CD8-positive, alpha-beta T cell (primary cell): ENCODE measurements at regions of chr9 and their contacts with region 1.

Region 1: GRCh38 chr9:137223078-137223970 is 1.3 kb upstream of the RNF208 start:
- DNase-seq: peak; percentile 95 to 99 (median 97)
- ATAC-seq: peak; percentile 93
- H3K4me3 ChIP-seq: peak overlapping the region; percentile 75 to 88
- H3K4me3 Mint-ChIP-seq: peak overlapping the region; percentile 83
- H3K27ac ChIP-seq: peak overlapping the region; percentile 69 to 86
- H3K27ac Mint-ChIP-seq: peak overlapping the region; percentile 81
- H3K4me1 ChIP-seq: peaks cover 19% of the 10 kb centered on the region
- H3K4me1 Mint-ChIP-seq: peaks cover 8% of the 10 kb centered on the region
- H3K27me3 ChIP-seq: peaks cover 0 to 5% of the 10 kb centered on the region in 2 experiments
- H3K27me3 Mint-ChIP-seq: peaks cover 3% of the 10 kb centered on the region
- CTCF ChIP-seq: no peak

Region 2: DNA sequence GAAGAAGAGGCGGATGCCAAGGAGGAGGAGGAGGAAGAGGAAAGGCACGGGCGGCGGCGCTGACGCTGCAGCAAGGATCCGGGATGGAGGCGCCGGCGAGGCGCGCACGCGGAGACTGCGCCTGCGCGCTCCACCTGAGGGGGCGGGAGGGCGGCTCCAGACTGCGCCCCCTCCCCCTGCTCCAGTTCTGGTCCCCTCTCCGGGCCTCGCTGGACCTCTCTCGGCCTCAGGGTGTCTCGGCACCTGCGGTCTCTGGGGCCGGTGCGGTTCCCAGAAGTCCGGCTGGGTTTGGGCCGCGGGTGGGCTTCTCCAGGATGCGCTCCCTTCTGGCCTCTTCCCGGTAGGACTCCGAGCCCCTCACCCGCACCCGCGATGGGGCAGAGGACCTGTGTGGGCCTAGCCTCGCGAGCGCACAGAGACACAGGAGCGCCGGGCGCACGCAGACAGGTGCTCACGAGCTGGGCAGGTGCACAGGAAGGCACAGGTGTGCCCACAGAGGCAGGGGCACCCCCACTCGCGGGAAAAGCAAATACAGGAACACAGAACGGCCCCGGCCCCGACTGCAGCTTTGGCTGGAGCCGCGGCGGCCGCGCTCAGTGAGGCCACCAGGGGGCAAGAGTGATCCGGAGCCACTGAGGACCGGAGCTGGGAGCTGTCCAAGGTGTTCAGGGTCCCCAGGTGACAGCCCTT is 177.1 kb before region 1 on chr9 and contains the start of gene NPDC1:
- CTCF ChIA-PET with region 1: interaction called, 7 read pairs
- POLR2A ChIA-PET with region 1: no interaction called
- intact Hi-C with region 1: loop called in 1 of 2 experiments (anchors 1 kb)
- DNase-seq: peak; percentile 64 to 87 (median 80)
- ATAC-seq: peak; percentile 87
- H3K4me3 ChIP-seq: peak within 1 kb of the TSS; percentile 28 to 45
- H3K4me3 Mint-ChIP-seq: peak within 1 kb of the TSS; percentile 68
- H3K27ac ChIP-seq: no peak within 1 kb of the TSS
- H3K27ac Mint-ChIP-seq: no peak within 1 kb of the TSS
- H3K4me1 ChIP-seq: peaks cover 29% of the 10 kb centered on the region
- H3K4me1 Mint-ChIP-seq: peaks cover 16% of the 10 kb centered on the region
- H3K27me3 ChIP-seq: peaks cover 44 to 67% of the 10 kb centered on the region in 2 experiments
- H3K27me3 Mint-ChIP-seq: peaks cover 26% of the 10 kb centered on the region
- CTCF ChIP-seq: peak; percentile 84
- total RNA-seq, gene NPDC1: 29.7 to 29.8 TPM

Region 3: GRCh38 chr9:137095664-137096517 is 127.4 kb before region 1 on chr9:
- CTCF ChIA-PET with region 1: interaction called, 9 read pairs
- POLR2A ChIA-PET with region 1: interaction called, 4 read pairs
- intact Hi-C with region 1: loop called (anchors 1 kb)
- DNase-seq: peak; percentile 73 to 95 (median 87)
- ATAC-seq: peak; percentile 97
- H3K4me3 ChIP-seq: peak overlapping the region; percentile 27 to 57
- H3K4me3 Mint-ChIP-seq: peak overlapping the region; percentile 80
- H3K27ac ChIP-seq: peak overlapping the region; percentile 73 to 84
- H3K27ac Mint-ChIP-seq: peak overlapping the region; percentile 96
- H3K4me1 ChIP-seq: peaks cover 22% of the 10 kb centered on the region
- H3K4me1 Mint-ChIP-seq: peaks cover 24% of the 10 kb centered on the region
- H3K27me3 ChIP-seq: no peaks in the 10 kb centered on the region
- H3K27me3 Mint-ChIP-seq: no peaks in the 10 kb centered on the region
- CTCF ChIP-seq: peak; percentile 68

Region 4: DNA sequence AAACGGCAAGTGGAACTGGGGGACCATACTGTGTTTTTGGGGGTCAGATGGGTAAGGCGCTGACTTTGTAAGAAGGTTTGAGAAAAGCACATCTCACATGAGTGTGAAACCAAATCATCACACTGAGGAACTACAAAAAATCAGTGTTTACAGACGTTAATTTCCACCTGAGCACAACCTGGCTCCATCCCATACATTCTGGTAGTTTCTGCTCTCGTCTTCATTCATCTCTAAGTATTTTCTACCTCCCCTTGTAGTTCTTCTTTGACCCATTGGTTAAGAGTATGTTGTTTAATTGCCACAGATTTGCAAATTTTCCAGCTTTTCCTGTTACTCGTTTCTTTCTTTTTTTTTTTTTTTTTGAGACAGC is 99.9 kb before region 1 on chr9:
- CTCF ChIA-PET with region 1: interaction called, 13 read pairs
- POLR2A ChIA-PET with region 1: interaction called, 4 read pairs
- intact Hi-C with region 1: loop called (anchors 1 kb)
- DNase-seq: no peak
- ATAC-seq: no peak
- H3K4me3 ChIP-seq: no peak overlapping the region
- H3K4me3 Mint-ChIP-seq: no peak overlapping the region
- H3K27ac ChIP-seq: no peak overlapping the region
- H3K27ac Mint-ChIP-seq: no peak overlapping the region
- H3K4me1 ChIP-seq: peaks cover 20% of the 10 kb centered on the region
- H3K4me1 Mint-ChIP-seq: peaks cover 25% of the 10 kb centered on the region
- H3K27me3 ChIP-seq: no peaks in the 10 kb centered on the region
- H3K27me3 Mint-ChIP-seq: no peaks in the 10 kb centered on the region
- CTCF ChIP-seq: no peak

Region 5: GRCh38 chr9:137176302-137177182 is 46.8 kb before region 1 on chr9:
- CTCF ChIA-PET with region 1: interaction called, 9 read pairs
- POLR2A ChIA-PET with region 1: no interaction called
- intact Hi-C with region 1: loop called in 1 of 2 experiments (anchors 2 kb)
- DNase-seq: peak in 3 of 9 experiments; percentile 23 to 55 (median 43)
- ATAC-seq: peak; percentile 61
- H3K4me3 ChIP-seq: no peak overlapping the region
- H3K4me3 Mint-ChIP-seq: no peak overlapping the region
- H3K27ac ChIP-seq: no peak overlapping the region
- H3K27ac Mint-ChIP-seq: no peak overlapping the region
- H3K4me1 ChIP-seq: peaks cover 8% of the 10 kb centered on the region
- H3K4me1 Mint-ChIP-seq: no peaks in the 10 kb centered on the region
- H3K27me3 ChIP-seq: peaks cover 0 to 7% of the 10 kb centered on the region in 2 experiments
- H3K27me3 Mint-ChIP-seq: no peaks in the 10 kb centered on the region
- CTCF ChIP-seq: peak; percentile 41

Region 6: DNA sequence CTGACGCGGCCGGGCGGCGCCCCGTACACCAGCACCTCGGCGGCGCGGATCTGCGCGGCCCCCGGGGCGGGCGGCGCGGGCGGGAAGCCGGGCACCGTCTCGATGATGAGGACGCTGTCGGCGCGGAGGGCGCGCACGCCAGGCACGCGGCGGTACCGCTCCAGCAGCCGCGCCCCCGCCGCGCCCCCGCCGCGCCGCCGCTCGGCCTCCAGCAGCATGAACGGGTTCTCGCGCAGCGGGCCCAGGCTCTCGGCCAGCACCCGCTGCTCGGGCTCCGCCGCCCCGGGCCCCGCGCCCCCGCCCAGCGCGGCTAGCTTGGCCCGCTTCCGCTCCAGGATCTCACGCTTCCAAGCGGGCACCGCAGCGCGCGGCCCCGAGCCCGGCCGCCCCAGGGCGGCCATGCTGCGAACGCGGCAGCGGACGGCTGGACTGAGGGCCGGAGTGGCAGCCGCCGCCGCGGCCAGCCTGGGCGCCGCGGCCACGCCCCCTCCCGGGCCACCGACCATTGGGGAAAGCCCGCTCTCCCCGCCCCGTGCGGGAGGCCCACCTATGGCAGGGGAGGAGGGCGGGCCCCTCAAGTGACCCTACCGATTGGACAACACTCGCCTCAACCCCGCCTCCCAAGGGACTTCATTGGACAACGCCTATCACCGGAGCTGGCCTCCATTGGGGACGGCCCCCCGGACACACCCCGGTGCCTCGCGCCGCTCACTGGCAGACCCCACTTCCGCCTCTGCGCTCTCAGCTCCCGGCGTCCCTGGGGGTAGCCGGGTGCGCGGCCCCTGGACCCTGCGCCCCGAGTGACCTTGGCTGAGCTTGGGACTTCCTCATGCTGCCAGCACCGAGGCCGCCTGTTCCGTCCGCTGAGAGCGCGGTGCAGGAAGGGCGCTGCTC is 22.8 kb before region 1 on chr9 and contains the start of gene TPRN:
- CTCF ChIA-PET with region 1: interaction called, 6 read pairs
- POLR2A ChIA-PET with region 1: interaction called, 22 read pairs
- intact Hi-C with region 1: loop called (anchors 1 kb)
- DNase-seq: peak; percentile 96 to 99 (median 98)
- ATAC-seq: peak; percentile 96
- H3K4me3 ChIP-seq: peak within 1 kb of the TSS; percentile 64 to 88
- H3K4me3 Mint-ChIP-seq: peak within 1 kb of the TSS; percentile 83
- H3K27ac ChIP-seq: peak within 1 kb of the TSS; percentile 65 to 82
- H3K27ac Mint-ChIP-seq: peak within 1 kb of the TSS; percentile 57
- H3K4me1 ChIP-seq: peaks cover 22% of the 10 kb centered on the region
- H3K4me1 Mint-ChIP-seq: peaks cover 27% of the 10 kb centered on the region
- H3K27me3 ChIP-seq: no peaks in the 10 kb centered on the region
- H3K27me3 Mint-ChIP-seq: no peaks in the 10 kb centered on the region
- CTCF ChIP-seq: no peak
- total RNA-seq, gene TPRN: 4.1 to 4.4 TPM

Region 7: DNA sequence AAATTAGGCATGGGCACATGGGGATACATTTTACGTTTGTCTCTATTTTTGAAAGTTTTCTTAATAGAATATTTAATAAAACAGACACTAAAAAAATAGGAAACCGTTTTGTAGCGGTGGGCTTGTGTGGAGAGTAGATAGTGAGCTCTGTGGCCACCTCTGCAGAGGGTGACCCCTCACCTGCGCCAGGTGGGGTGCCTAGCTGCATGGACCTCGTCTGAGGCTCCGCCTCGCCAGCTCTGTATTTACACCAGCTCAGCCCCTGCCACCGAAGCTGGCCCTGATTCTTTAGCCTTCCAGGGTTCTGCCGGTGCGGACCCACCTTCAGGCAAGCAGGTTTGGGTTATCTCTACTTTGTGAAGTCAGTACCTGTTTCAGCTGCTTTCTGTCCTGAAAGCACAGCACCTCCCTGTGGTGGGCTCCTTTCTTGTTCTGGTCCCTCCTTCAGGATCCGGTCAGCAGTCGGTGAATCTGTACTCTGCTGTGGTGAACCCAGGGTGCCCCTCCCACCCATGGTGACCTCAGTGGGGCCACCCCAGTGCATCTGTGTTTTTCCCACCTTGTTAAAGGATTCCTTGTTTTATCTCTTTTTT is 549.1 kb after region 1 on chr9:
- CTCF ChIA-PET with region 1: no interaction called
- POLR2A ChIA-PET with region 1: no interaction called
- intact Hi-C with region 1: no loop called
- DNase-seq: no peak
- ATAC-seq: no peak
- H3K4me3 ChIP-seq: no peak overlapping the region
- H3K4me3 Mint-ChIP-seq: no peak overlapping the region
- H3K27ac ChIP-seq: no peak overlapping the region
- H3K27ac Mint-ChIP-seq: peak overlapping the region; percentile 29
- H3K4me1 ChIP-seq: no peaks in the 10 kb centered on the region
- H3K4me1 Mint-ChIP-seq: peaks cover 1% of the 10 kb centered on the region
- H3K27me3 ChIP-seq: no peaks in the 10 kb centered on the region
- H3K27me3 Mint-ChIP-seq: no peaks in the 10 kb centered on the region
- CTCF ChIP-seq: no peak